ENCODE measurements at regions of chr12 and their contacts with region 1.

Region 1: DNA sequence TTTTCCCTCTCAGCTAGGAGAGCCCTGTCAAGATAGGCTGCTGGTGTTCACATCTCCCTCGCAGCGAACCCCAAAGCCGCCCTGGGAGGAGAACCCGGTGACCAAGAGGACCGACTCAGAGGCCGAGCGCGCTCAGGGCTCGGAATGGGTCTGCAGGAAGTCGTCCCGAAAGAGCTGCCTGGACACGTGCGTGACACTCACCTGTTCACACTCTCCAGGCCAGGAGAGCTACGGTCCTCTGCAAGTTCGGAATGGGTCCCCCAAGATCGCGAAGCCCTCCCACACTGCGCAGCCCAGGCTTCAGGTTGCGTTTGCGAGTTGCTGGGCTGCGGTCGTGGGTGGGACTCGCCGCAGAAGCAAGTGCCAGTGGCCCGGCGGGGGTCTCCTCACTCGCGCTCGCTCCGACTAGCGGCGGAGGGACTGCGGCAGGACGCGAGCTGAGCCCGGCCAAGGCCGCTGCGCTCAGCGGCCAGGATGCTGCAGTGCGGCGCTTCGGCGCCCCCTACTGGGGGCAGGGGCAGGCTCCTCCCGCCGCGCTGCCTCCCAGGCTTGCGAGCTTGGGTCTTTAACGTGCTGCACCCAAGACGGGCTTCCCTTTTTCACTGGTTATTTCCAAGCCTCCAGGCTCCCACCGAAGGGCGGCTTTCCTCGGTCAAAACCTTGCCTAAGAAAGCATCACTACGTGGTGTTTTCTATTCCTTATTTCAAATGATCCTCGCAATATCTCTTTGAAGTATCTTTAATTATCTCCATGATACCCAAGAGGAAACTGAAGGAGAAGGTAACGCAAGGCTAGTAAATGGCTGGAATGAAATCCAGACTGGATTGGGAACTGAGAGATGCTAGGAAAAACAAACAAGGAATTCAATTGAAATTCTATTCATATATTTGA is at the start of gene RERG:
- DNase-seq: peak; percentile 74
- ATAC-seq: peak; percentile 100
- H3K4me3 ChIP-seq: peak within 1 kb of the TSS; percentile 61
- H3K27ac ChIP-seq: no peak within 1 kb of the TSS
- H3K4me1 ChIP-seq: no peaks in the 10 kb centered on the region
- H3K27me3 ChIP-seq: peaks cover 46% of the 10 kb centered on the region
- CTCF ChIP-seq: peak; percentile 84
- total RNA-seq, gene RERG: not detected in 2 replicates

Region 2: DNA sequence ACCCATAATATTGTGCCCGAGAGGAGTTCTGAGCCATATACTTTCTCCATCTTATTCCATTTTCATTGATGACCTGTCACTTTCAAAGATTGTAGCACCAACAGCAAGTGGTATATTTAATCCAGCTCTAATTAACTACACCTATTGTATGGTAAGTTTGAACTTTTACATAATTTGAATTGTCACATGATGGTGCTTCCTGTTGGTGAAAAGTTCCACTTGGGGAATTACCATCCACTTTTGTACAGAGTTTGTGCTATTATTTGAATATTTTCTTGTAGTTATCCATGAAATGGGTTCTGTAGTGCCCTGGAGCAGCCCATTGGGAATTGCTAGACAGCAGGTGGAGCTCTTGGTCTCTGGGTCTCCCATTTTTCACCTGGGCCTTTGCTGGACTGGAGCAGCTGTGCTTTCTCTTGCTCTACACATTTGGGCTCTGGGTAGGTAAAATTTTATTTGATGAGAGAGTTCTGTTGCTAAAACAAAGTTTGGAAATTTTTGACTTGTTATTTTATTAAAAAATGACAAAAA is 410.2 kb before region 1 on chr12:
- CTCF ChIA-PET with region 1: no interaction called
- POLR2A ChIA-PET with region 1: no interaction called
- intact Hi-C with region 1: loop called (anchors 5 kb)
- DNase-seq: peak; percentile 61
- ATAC-seq: peak; percentile 87
- H3K4me3 ChIP-seq: no peak overlapping the region
- H3K27ac ChIP-seq: no peak overlapping the region
- H3K4me1 ChIP-seq: no peaks in the 10 kb centered on the region
- H3K27me3 ChIP-seq: no peaks in the 10 kb centered on the region
- CTCF ChIP-seq: peak; percentile 77

Region 3: DNA sequence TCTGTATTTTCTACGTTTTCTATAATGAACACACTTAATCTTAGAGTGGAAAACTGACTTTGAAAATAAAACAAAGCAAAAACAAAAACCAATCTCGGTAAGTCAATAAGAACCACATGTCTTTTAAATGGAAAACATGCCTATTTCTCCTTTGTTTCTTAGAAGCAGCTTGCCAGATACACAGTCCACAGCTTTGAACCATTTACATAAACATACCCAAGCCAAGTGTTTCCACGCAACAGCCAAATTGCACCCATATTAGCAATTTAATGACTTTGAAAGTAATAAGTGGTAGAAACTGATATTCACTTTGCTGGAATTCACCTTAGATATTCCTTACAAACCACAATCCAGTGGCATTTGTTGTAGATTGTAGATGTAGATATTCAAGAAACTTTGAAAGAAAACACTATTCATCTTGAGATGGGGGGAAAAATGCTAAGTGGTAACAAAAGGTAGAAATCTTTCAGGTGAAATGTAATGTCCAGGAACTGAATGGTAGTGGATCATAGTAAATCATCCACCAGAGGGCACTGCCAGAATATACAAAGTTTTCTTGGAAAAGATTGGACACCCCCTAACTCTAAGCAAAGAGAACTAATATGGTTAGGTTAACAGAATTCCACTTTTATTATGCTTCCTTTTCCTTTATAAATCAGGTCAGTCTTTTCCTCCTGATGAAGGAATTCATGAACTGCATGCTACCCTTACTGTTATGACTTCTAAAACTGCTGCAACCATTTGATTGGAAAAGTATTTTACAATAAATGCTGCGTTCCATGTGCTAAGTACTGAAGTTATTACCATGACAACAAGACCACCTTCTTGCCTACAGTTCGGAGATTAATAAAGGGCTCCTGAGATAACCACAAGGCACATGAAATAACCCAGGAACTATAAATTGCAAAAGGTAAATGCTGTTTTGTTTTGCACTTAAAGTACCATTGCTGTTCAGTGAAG is 69.8 kb before region 1 on chr12:
- CTCF ChIA-PET with region 1: no interaction called
- POLR2A ChIA-PET with region 1: no interaction called
- intact Hi-C with region 1: loop called (anchors 1 kb)
- DNase-seq: peak; percentile 42
- ATAC-seq: no peak
- H3K4me3 ChIP-seq: no peak overlapping the region
- H3K27ac ChIP-seq: no peak overlapping the region
- H3K4me1 ChIP-seq: no peaks in the 10 kb centered on the region
- H3K27me3 ChIP-seq: peaks cover 43% of the 10 kb centered on the region; the same call in 1 of the 2 replicates
- CTCF ChIP-seq: peak; percentile 61